Naive thymus-derived CD4-positive, alpha-beta T cell (primary cell): ENCODE measurements at regions of chr6 and their contacts with region 1.

Region 1: DNA sequence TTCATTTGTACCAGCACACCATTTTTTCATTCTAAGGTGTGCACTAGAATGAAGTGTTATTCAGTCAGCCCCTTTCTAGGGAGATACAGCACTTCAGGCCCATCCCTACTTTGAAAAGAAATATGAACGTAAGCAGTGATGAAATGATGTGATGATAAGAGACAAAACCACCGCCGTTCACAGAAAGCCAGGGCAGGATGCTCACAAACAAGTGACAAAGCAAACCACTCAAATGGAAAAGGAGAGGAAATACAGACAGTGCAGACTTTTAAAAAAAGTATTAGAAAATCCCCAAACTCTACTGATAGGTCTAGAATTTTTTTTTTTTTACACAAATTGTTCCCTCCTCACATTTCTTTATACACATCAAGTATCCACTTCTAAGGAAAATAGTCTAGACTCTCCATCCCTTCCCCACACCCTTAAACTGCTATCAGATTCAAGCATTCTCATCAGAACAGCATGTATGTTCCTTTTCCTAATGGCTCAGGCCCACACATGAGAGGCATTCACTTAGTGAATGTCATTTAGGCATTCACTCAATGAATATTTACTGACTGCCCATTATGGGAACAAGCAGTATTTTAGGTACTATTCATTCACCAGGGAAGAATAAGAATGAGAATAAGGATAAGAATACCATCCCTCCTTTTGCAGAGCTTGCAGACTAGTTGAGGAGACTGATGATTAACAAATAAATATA is 243.5 kb downstream of the GMPR start:
- DNase-seq: peak in 8 of 9 donors; percentile 51 to 90 (median 83)
- ATAC-seq: peak; percentile 86
- H3K4me3 ChIP-seq: no peak overlapping the region
- H3K4me3 Mint-ChIP-seq: peak overlapping the region in 9 of 10 donors; percentile 1 to 70 (median 46)
- H3K27ac ChIP-seq: peak overlapping the region; percentile 75
- H3K27ac Mint-ChIP-seq: peak overlapping the region; percentile 64 to 96 (median 91)
- H3K4me1 ChIP-seq: peaks cover 33 to 64% of the 10 kb centered on the region in 2 donors
- H3K4me1 Mint-ChIP-seq: peaks cover 29 to 87% (median 56%) of the 10 kb centered on the region in 7 donors
- H3K27me3 ChIP-seq: no peaks in the 10 kb centered on the region
- H3K27me3 Mint-ChIP-seq: no peaks in the 10 kb centered on the region

Region 2: GRCh38 chr6:16332175-16332542 is 149.7 kb before region 1 on chr6:
- CTCF ChIA-PET with region 1: no interaction called
- POLR2A ChIA-PET with region 1: no interaction called
- intact Hi-C with region 1: loop called in 1 of 2 experiments (anchors 1 kb)
- DNase-seq: peak; percentile 51 to 80 (median 73)
- ATAC-seq: peak; percentile 96
- H3K4me3 ChIP-seq: peak overlapping the region; percentile 19
- H3K4me3 Mint-ChIP-seq: no peak overlapping the region
- H3K27ac ChIP-seq: peak overlapping the region; percentile 32
- H3K27ac Mint-ChIP-seq: no peak overlapping the region
- H3K4me1 ChIP-seq: peaks cover 12 to 13% of the 10 kb centered on the region in 2 donors
- H3K4me1 Mint-ChIP-seq: peaks cover 0 to 6% (median 0%) of the 10 kb centered on the region in 7 donors
- H3K27me3 ChIP-seq: no peaks in the 10 kb centered on the region
- H3K27me3 Mint-ChIP-seq: no peaks in the 10 kb centered on the region

Region 3: GRCh38 chr6:16437984-16438383 is 43.9 kb before region 1 on chr6:
- CTCF ChIA-PET with region 1: no interaction called
- POLR2A ChIA-PET with region 1: interaction called, 3 read pairs
- intact Hi-C with region 1: loop called in 1 of 2 experiments (anchors 1 kb)
- DNase-seq: no peak
- ATAC-seq: peak; percentile 45
- H3K4me3 ChIP-seq: peak overlapping the region; percentile 40
- H3K4me3 Mint-ChIP-seq: peak overlapping the region in 3 of 10 donors; percentile 8 to 77 (median 17)
- H3K27ac ChIP-seq: no peak overlapping the region
- H3K27ac Mint-ChIP-seq: peak overlapping the region in 1 of 9 donors; percentile 91
- H3K4me1 ChIP-seq: peaks cover 15 to 39% of the 10 kb centered on the region in 2 donors
- H3K4me1 Mint-ChIP-seq: peaks cover 21 to 76% (median 45%) of the 10 kb centered on the region in 7 donors
- H3K27me3 ChIP-seq: no peaks in the 10 kb centered on the region
- H3K27me3 Mint-ChIP-seq: no peaks in the 10 kb centered on the region

Region 4: GRCh38 chr6:16514249-16514648 is 32.4 kb after region 1 on chr6:
- CTCF ChIA-PET with region 1: no interaction called
- POLR2A ChIA-PET with region 1: no interaction called
- intact Hi-C with region 1: loop called (anchors 1 to 2 kb)
- DNase-seq: peak in 6 of 9 donors; percentile 16 to 31 (median 24)
- ATAC-seq: peak; percentile 59
- H3K4me3 ChIP-seq: no peak overlapping the region
- H3K4me3 Mint-ChIP-seq: peak overlapping the region in 1 of 10 donors; percentile 41
- H3K27ac ChIP-seq: no peak overlapping the region
- H3K27ac Mint-ChIP-seq: peak overlapping the region in 7 of 9 donors; percentile 10 to 56 (median 40)
- H3K4me1 ChIP-seq: peaks cover 14 to 29% of the 10 kb centered on the region in 2 donors
- H3K4me1 Mint-ChIP-seq: peaks cover 29 to 73% (median 58%) of the 10 kb centered on the region in 7 donors
- H3K27me3 ChIP-seq: no peaks in the 10 kb centered on the region
- H3K27me3 Mint-ChIP-seq: no peaks in the 10 kb centered on the region

Region 5: DNA sequence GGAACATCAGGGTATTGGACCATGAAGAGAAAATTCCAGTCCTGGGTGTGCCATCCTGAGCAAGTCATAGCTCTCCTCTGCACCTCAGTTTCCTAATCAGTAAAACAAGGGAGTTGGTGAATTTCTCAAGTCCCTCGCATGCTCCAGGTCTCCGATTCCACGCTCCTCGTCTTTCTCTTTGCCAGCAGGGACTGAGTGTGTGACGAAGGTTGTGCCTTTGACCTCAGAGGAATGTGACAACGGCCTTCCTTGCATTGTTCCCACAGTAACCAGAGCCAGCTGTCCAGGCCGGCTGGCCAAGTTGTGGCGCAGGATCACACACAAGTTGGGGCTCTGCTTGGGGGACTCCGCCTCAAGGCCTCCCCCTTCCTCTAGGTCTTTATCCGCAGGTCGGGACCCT is 62.2 kb after region 1 on chr6:
- CTCF ChIA-PET with region 1: no interaction called
- POLR2A ChIA-PET with region 1: no interaction called
- intact Hi-C with region 1: no loop called
- DNase-seq: no peak
- ATAC-seq: no peak
- H3K4me3 ChIP-seq: no peak overlapping the region
- H3K4me3 Mint-ChIP-seq: no peak overlapping the region
- H3K27ac ChIP-seq: no peak overlapping the region
- H3K27ac Mint-ChIP-seq: no peak overlapping the region
- H3K4me1 ChIP-seq: no peaks in the 10 kb centered on the region
- H3K4me1 Mint-ChIP-seq: peaks cover 0 to 9% (median 0%) of the 10 kb centered on the region in 7 donors
- H3K27me3 ChIP-seq: no peaks in the 10 kb centered on the region
- H3K27me3 Mint-ChIP-seq: no peaks in the 10 kb centered on the region

Region 6: DNA sequence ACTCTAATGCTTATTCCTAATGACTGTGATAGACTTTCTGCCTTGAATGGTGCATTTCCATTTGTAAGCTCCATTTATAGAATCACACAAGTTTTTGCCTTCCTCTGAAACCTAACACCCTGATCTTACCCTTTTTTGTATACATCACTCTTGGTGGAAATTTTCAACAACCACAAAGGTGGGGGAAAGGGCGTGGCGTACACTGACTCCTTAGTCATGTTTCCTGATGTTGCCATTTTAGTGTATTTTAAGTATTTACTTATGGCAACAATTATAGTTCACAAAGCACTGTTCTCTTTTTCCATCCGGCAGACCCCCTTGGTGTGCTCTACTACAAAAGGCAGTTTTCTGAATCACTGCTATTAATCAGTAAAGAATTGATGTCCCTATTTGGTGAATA is 187.4 kb after region 1 on chr6:
- CTCF ChIA-PET with region 1: no interaction called
- POLR2A ChIA-PET with region 1: no interaction called
- intact Hi-C with region 1: loop called in 1 of 2 experiments (anchors 2 kb)
- DNase-seq: peak in 1 of 9 donors; percentile 69
- ATAC-seq: peak; percentile 67
- H3K4me3 ChIP-seq: no peak overlapping the region
- H3K4me3 Mint-ChIP-seq: peak overlapping the region in 1 of 10 donors; percentile 80
- H3K27ac ChIP-seq: no peak overlapping the region
- H3K27ac Mint-ChIP-seq: peak overlapping the region in 2 of 9 donors; percentile 43 to 90
- H3K4me1 ChIP-seq: peaks cover 0 to 31% of the 10 kb centered on the region in 2 donors
- H3K4me1 Mint-ChIP-seq: peaks cover 17 to 52% (median 28%) of the 10 kb centered on the region in 7 donors
- H3K27me3 ChIP-seq: no peaks in the 10 kb centered on the region
- H3K27me3 Mint-ChIP-seq: no peaks in the 10 kb centered on the region

Region 7: GRCh38 chr6:16836144-16836981 is 354.5 kb after region 1 on chr6:
- CTCF ChIA-PET with region 1: no interaction called
- POLR2A ChIA-PET with region 1: no interaction called
- intact Hi-C with region 1: loop called in 1 of 2 experiments (anchors 2 kb)
- DNase-seq: no peak
- ATAC-seq: peak; percentile 38
- H3K4me3 ChIP-seq: peak overlapping the region; percentile 40
- H3K4me3 Mint-ChIP-seq: peak overlapping the region in 6 of 10 donors; percentile 24 to 81 (median 45)
- H3K27ac ChIP-seq: no peak overlapping the region
- H3K27ac Mint-ChIP-seq: peak overlapping the region in 2 of 9 donors; percentile 37 to 74
- H3K4me1 ChIP-seq: peaks cover 0 to 18% of the 10 kb centered on the region in 2 donors
- H3K4me1 Mint-ChIP-seq: peaks cover 7 to 29% (median 14%) of the 10 kb centered on the region in 7 donors
- H3K27me3 ChIP-seq: no peaks in the 10 kb centered on the region
- H3K27me3 Mint-ChIP-seq: peaks cover 0 to 20% (median 10%) of the 10 kb centered on the region in 5 donors

Region 8: DNA sequence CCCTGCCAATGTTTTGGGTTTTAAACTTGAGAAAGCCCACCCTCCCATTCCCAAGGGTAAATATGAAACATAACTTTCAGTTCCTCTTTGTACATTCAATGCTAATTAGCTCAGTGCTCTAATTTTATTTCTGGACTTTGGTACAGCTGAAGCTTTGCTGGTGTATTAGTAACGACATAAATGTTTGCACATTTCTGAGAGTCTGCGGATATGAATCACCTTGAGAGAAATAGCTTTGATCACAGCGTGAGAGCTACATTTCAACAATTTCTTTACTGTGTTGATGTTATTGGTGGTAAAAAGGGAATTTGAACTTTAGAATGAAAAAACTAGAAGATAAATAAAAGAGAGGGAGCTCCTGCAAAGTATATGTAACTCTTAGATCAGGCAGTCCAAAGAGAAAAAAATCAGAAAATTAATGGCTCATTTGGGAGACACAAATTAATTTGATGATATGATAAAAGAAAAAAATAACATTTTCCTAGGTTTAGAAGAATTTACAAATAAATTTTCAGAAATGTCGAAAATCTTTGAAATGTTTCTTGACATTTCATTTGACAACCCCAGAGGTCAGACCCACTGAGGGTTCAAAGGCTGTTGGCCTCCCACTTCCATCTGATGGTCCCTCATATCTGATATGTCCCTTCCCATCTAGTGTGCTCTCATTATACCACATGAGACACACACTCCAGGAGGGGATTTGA is 873.0 kb after region 1 on chr6:
- CTCF ChIA-PET with region 1: no interaction called
- POLR2A ChIA-PET with region 1: no interaction called
- intact Hi-C with region 1: no loop called
- DNase-seq: no peak
- ATAC-seq: no peak
- H3K4me3 ChIP-seq: no peak overlapping the region
- H3K4me3 Mint-ChIP-seq: no peak overlapping the region
- H3K27ac ChIP-seq: no peak overlapping the region
- H3K27ac Mint-ChIP-seq: no peak overlapping the region
- H3K4me1 ChIP-seq: no peaks in the 10 kb centered on the region
- H3K4me1 Mint-ChIP-seq: no peaks in the 10 kb centered on the region
- H3K27me3 ChIP-seq: no peaks in the 10 kb centered on the region
- H3K27me3 Mint-ChIP-seq: peaks cover 0 to 15% (median 4%) of the 10 kb centered on the region in 5 donors